Activated CD4-positive, alpha-beta T cell treated with anti-CD3 and anti-CD28 coated beads, Interleukin-2, amount 10 ng/mL, durations not matched to agents 24 days and 14 days (primary cell): ENCODE measurements at regions of chr17 and their contacts with region 1.

Region 1: DNA sequence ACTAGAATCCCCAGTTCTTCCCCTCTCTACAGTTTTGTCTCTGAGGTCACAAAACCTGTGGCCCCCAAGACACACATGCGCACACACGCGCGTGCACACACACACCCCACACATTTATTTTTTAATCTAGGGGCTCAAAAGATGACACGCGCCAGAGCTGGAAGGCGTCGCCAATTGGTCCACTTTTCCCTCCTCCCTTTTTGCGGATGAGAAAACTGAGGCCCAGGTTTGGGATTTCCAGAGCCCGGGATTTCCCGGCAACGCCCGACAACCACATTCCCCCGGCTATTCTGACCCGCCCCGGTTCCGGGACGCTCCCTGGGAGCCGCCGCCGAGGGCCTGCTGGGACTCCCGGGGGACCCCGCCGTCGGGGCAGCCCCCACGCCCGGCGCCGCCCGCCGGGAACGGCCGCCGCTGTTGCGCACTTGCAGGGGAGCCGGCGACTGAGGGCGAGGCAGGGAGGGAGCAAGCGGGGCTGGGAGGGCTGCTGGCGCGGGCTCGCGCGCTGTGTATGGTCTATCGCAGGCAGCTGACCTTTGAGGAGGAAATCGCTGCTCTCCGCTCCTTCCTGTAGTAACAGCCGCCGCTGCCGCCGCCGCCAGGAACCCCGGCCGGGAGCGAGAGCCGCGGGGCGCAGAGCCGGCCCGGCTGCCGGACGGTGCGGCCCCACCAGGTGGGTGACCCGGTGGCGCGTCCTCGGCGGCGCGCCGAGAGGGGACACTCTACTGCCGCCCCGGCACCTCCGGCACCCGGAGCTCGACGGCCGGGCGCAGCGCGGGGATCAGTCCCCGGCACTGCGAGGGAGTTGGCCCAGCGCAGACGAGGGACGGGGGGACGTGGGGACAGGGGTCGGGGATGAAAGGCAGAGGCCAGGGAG is at the start of gene STAT5A:
- DNase-seq: peak; percentile 95
- H3K4me3 Mint-ChIP-seq: peak within 1 kb of the TSS; percentile 89
- H3K27ac Mint-ChIP-seq: peak within 1 kb of the TSS; percentile 92
- H3K4me1 Mint-ChIP-seq: peaks cover 46% of the 10 kb centered on the region
- H3K27me3 Mint-ChIP-seq: no peaks in the 10 kb centered on the region
- total RNA-seq, gene STAT5A: 346 and 348 TPM in 2 replicates

Region 2: DNA sequence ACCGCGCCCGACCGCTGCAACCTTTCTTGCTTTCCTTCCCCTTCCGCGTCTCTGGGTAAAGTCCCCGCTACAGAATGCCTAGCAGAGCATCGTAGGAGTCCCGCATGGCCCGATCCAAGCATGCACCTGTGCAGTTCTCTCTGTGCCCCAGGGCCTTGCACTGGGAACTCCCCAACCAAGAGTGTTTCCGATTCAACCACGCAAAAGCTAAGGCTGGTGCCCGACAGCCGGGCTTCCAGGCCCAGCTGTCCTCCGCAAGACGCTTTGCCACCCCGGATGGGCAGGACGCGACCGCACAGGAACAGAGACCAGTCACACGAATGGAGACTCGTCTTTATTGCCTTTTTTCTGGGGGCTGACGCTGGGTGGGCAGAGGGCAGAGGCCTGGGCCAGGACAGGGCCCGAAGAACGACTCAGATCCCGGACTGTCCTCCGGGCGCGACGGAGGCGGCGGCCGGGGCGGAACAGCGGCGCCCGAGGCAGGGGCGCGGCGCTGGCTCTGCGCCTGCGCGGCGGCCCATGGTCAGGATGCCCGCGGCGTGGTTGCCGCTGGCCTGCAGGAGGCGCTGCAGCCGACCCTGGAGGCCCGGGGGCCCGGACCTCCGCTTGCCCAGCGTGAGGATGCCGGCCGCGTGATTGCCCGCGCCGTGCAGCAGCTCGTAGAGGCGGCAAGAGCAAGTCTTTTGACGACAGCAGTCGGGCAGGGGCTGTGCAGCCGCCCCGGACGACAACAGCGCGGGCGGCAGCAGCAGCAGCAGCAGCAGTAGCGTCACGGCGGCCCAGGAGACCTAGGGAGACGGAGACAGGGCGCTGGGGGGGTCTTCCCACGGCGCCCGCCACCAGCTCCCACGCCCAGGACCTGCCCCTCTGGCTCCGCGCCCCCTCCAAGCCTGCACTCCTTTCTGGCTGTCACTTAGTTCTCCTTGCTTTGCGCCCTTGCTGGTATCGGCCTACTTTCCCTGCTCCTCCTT is 104.1 kb before region 1 on chr17:
- intact Hi-C with region 1: loop called (anchors 2 kb)
- DNase-seq: peak; percentile 96
- H3K4me3 Mint-ChIP-seq: peak overlapping the region; percentile 89
- H3K27ac Mint-ChIP-seq: peak overlapping the region; percentile 93
- H3K4me1 Mint-ChIP-seq: peaks cover 34% of the 10 kb centered on the region
- H3K27me3 Mint-ChIP-seq: peaks cover 17% of the 10 kb centered on the region

Region 3: DNA sequence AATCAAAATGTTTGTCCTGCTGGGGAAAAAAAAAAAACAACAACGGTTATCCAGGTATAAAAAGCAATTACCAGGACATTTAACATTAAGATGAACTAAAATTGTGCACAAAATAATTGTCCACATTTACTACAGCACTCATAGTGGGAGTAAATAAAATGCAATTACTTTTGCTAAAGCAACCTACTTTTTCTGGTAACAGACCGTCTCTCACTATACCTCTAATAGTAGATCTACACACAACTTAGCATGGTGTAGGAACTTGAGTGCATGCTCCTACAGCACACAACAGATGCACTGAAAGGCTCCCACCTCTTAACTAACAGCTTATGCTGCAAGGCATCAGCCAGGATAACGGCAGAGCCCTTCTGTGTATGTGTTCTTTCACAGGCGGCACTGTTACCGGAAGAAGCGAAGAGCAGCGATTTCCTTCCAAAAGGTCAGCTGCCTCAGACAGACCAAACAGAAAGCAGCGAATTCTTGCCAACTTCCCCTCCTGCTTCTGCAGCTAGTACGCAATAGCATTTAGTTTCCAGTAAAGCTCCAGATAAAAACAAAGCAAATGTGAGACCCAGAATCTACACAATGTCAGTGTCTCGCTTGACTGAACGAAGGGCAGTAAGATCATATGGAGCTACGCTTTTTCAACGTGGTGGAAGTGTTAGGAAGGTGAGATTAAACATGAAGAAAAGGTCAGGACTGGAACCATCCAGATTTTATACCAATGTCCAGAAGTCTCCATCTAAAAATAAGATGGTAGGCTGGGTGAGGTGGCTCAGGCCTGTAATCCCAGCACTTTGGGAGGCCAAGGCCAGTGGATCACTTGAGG is 39.6 kb before region 1 on chr17:
- intact Hi-C with region 1: loop called (anchors 1 kb)
- DNase-seq: peak; percentile 94
- H3K4me3 Mint-ChIP-seq: peak overlapping the region; percentile 87
- H3K27ac Mint-ChIP-seq: peak overlapping the region; percentile 98
- H3K4me1 Mint-ChIP-seq: peaks cover 58% of the 10 kb centered on the region
- H3K27me3 Mint-ChIP-seq: no peaks in the 10 kb centered on the region

Region 4: DNA sequence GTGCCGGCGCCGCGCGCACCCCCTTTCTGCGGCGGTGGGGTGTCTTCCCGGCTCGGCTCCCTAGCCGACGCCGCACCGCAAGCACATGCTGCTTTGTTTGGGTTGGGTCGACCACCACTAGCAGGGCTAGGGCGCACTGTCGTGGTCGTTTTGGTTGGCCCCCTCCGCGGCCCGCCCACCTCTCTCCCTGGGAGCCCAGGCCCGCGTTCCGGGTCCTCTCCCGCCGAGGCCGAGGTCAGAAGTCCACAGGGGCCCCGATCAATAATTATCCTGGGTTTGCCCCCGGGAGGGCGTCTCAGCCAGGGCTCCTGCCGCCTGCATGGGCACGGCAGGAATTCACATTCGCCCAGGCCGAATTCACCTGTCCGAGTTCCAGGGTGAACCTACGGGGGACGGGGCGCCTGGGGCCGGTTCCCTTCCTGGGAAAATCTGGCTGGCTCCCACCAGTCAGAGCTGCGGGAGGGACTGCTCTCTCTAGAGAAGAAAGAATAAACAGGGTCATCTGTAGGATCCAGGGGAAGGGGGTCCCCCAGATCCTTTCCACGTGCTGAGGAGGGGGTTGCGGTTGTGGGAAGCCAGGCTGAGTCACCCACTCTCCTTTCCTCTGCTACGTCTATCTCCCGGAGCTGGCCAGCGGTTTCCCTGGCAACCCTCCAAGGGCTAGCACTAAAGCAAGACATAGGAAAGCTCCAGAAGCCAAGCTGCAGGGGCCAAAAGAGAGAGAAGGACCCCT is 11.4 kb before region 1 on chr17:
- intact Hi-C with region 1: loop called (anchors 1 kb)
- DNase-seq: peak; percentile 75
- H3K4me3 Mint-ChIP-seq: peak overlapping the region; percentile 80
- H3K27ac Mint-ChIP-seq: peak overlapping the region; percentile 94
- H3K4me1 Mint-ChIP-seq: peaks cover 41% of the 10 kb centered on the region
- H3K27me3 Mint-ChIP-seq: no peaks in the 10 kb centered on the region

Region 5: GRCh38 chr17:42354956-42355843 is 67.0 kb after region 1 on chr17:
- intact Hi-C with region 1: no loop called
- DNase-seq: no peak
- H3K4me3 Mint-ChIP-seq: peak overlapping the region; percentile 38
- H3K27ac Mint-ChIP-seq: peak overlapping the region; percentile 39
- H3K4me1 Mint-ChIP-seq: peaks cover 39% of the 10 kb centered on the region
- H3K27me3 Mint-ChIP-seq: no peaks in the 10 kb centered on the region

Region 6: DNA sequence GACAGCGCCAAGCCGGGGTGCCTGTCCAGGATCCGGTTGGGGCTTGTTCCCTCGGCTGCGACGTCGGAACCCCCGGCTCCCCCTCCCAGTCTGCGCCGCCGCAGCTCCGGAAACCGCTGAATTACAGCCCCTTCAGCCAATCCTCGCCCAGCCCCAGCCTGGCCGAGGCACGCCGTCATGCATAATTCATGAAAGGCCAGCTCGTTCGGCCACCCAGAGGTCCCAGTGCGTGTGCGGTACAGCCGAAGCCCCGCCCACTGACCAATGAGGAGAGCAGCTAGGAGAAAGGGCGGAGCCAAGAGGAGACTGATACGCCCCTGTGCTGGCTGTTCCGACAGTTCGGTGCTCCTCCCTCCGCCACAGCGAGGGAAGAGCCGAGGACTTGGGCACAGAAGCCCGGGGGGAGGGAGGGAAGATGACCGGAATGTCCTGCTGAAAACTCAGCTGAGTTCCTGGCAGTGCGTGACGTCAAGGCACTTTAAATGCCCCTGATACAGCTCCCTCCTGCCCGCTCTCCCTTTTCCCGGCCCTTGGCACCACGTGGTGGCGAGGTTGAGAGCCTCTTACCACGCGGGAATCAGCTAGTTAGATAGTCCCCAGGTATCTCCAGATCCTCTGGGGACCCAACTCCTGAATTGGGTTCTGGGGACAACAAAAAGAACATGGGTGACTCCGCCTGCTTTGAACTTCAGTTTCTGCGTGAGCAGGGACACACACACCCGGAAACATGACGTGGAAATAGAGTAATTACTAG is 100.4 kb after region 1 on chr17 and contains the start of gene STAT3:
- intact Hi-C with region 1: loop called (anchors 1 kb)
- DNase-seq: peak; percentile 100
- H3K4me3 Mint-ChIP-seq: peak within 1 kb of the TSS; percentile 83
- H3K27ac Mint-ChIP-seq: peak within 1 kb of the TSS; percentile 100
- H3K4me1 Mint-ChIP-seq: peaks cover 46% of the 10 kb centered on the region
- H3K27me3 Mint-ChIP-seq: no peaks in the 10 kb centered on the region
- total RNA-seq, gene STAT3: 252 and 258 TPM in 2 replicates

Region 7: DNA sequence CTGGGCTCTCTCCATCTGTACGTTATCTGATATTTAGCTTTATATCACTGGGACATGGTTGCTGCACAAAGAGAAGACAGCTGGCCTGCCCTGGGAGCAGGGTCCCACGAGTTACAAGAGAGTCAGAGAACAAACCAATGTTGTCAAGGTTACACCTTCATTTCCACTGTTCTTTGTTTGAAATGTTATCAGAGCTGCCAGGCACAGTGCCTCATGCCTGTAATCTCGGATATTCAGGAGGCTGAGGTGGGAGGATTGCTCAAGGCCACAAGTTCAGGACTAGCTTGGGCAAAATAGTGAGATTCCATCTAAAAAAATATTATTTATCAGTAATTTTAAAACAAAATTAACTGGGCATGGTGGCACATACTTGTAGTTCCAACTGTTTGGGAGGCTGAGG is 205.2 kb after region 1 on chr17:
- intact Hi-C with region 1: no loop called
- DNase-seq: no peak
- H3K4me3 Mint-ChIP-seq: no peak overlapping the region
- H3K27ac Mint-ChIP-seq: no peak overlapping the region
- H3K4me1 Mint-ChIP-seq: peaks cover 2% of the 10 kb centered on the region
- H3K27me3 Mint-ChIP-seq: no peaks in the 10 kb centered on the region